ENCODE measurements at regions of chr21 and their contacts with region 1.

Region 1: DNA sequence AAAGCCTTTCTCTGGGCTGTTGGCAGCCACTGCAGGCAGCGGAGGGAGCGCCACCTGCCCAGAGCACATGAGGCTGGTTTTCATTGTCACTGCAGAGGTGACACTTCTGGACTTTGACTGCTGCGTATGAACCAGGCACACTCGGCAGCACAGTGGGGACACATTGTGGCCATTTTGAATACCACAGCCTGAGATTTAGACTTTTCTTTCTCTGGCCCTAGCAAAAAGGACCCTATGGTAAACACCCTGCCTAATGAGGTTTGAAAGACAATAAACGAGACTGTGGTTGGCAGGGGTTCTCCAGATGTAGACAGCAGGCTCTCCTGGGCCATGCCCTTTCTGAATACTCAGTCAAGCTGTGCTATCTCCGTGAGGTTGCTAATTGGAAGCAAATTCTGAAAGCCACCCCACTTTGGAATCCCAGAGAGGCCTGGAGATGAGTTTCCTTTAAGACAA is 12.0 kb upstream of the KCNE2 start:
- DNase-seq: peak in 1 of 5 donors; percentile 10
- H3K4me3 ChIP-seq: no peak overlapping the region
- H3K4me3 Mint-ChIP-seq: no peak overlapping the region
- H3K27ac ChIP-seq: no peak overlapping the region
- H3K27ac Mint-ChIP-seq: no peak overlapping the region
- H3K4me1 ChIP-seq: no peaks in the 10 kb centered on the region
- H3K4me1 Mint-ChIP-seq: peaks cover 4 to 6% (median 5%) of the 10 kb centered on the region in 3 donors
- H3K27me3 ChIP-seq: no peaks in the 10 kb centered on the region
- H3K27me3 Mint-ChIP-seq: peaks cover 25 to 26% of the 10 kb centered on the region in 2 donors

Region 2: GRCh38 chr21:34280389-34280795 is 71.4 kb before region 1 on chr21:
- CTCF ChIA-PET with region 1: no interaction called
- POLR2A ChIA-PET with region 1: no interaction called
- DNase-seq: no peak
- H3K4me3 ChIP-seq: no peak overlapping the region
- H3K4me3 Mint-ChIP-seq: no peak overlapping the region
- H3K27ac ChIP-seq: no peak overlapping the region
- H3K27ac Mint-ChIP-seq: no peak overlapping the region
- H3K4me1 ChIP-seq: no peaks in the 10 kb centered on the region
- H3K4me1 Mint-ChIP-seq: no peaks in the 10 kb centered on the region
- H3K27me3 ChIP-seq: peaks cover 5% of the 10 kb centered on the region
- H3K27me3 Mint-ChIP-seq: peaks cover 2 to 15% of the 10 kb centered on the region in 2 donors

Region 3: DNA sequence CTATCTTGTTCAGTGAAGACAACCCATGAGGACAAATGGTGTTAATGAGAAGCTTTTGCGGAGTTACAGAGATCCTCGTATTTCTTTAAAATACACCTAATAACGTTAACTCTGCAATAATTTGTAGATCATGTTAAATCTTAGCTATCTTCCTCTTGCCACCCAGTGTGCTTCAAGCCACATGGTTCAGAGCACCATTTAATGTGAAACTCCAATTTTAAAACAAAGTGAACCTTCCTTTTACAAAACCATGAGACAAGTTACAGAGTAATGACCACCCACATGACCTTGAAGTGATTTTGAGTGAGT is 10.3 kb after region 1 on chr21:
- CTCF ChIA-PET with region 1: interaction called, 10 read pairs
- POLR2A ChIA-PET with region 1: no interaction called
- DNase-seq: no peak
- H3K4me3 ChIP-seq: no peak overlapping the region
- H3K4me3 Mint-ChIP-seq: no peak overlapping the region
- H3K27ac ChIP-seq: no peak overlapping the region
- H3K27ac Mint-ChIP-seq: no peak overlapping the region
- H3K4me1 ChIP-seq: no peaks in the 10 kb centered on the region
- H3K4me1 Mint-ChIP-seq: peaks cover 3 to 7% (median 5%) of the 10 kb centered on the region in 3 donors
- H3K27me3 ChIP-seq: peaks cover 4% of the 10 kb centered on the region
- H3K27me3 Mint-ChIP-seq: peaks cover 12 to 26% of the 10 kb centered on the region in 2 donors